ENCODE measurements at regions of chr14 and their contacts with region 1.

Region 1: DNA sequence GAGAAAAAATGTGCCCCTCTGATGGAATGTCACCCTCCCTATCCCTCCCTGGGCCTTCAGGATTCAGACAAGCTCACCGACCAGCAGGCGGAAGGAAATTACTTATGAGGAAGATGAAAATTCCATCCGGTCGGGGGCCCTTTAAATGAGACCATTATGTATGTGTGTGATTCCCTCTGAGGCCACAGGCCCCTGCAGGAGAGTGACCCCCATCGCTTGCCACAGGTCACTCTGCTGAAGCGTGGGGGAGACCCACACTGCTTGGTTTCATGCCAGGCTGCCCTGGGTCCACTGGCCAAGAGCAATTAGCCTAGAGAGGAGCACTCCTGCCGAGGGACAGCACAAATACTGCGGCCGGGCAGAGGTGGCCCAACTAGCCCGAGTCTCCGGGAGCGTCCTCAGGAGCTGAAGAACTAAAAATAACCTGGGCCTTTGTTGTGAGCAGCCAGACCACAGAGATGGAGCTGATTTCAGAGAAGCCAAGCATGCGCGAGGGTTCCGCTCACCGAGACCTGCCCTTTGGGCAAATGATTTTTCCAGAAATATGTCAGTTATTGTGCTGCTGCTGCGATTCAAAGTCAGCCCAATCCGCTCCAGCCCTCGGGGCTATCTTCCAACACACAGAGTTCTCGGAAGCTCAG is 276.4 kb downstream of the DPF3 start:
- DNase-seq: peak; percentile 40 to 42
- ATAC-seq: peak; percentile 61 to 70
- H3K4me3 ChIP-seq: peak overlapping the region in 3 of 4 donors; percentile 10 to 28 (median 16)
- H3K27ac ChIP-seq: peak overlapping the region; percentile 75 to 90 (median 85)
- H3K4me1 ChIP-seq: peaks cover 58% of the 10 kb centered on the region in 2 donors
- H3K27me3 ChIP-seq: no peaks in the 10 kb centered on the region
- CTCF ChIP-seq: no peak
- POLR2A ChIP-seq: no peak

Region 2: DNA sequence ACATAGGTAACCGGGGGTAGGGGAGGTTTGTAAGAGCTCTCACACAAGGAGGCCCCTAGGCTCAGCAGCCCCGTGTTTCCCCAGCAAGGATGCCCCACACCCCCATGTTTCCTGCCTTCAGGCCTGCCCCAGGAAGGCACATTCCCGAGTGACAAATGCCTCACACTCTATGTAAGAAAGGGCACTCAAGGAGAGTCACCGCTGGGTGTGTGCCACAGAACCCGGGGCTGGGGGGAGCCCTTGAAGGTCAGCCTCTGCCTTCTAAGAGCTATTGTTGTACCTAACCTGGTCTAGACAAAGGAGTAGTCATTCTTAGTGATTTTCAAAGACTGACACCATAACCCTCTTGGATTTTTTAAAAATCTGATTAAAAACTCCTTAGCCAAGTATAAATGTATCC is 57.2 kb before region 1 on chr14:
- in situ Hi-C with region 1: no loop called
- intact Hi-C with region 1: loop called (anchors 5 kb)
- DNase-seq: no peak
- ATAC-seq: no peak
- H3K4me3 ChIP-seq: no peak overlapping the region
- H3K27ac ChIP-seq: peak overlapping the region in 1 of 4 donors; percentile 10
- H3K4me1 ChIP-seq: peaks cover 32 to 45% of the 10 kb centered on the region in 2 donors
- H3K27me3 ChIP-seq: no peaks in the 10 kb centered on the region
- CTCF ChIP-seq: no peak
- POLR2A ChIP-seq: no peak

Region 3: DNA sequence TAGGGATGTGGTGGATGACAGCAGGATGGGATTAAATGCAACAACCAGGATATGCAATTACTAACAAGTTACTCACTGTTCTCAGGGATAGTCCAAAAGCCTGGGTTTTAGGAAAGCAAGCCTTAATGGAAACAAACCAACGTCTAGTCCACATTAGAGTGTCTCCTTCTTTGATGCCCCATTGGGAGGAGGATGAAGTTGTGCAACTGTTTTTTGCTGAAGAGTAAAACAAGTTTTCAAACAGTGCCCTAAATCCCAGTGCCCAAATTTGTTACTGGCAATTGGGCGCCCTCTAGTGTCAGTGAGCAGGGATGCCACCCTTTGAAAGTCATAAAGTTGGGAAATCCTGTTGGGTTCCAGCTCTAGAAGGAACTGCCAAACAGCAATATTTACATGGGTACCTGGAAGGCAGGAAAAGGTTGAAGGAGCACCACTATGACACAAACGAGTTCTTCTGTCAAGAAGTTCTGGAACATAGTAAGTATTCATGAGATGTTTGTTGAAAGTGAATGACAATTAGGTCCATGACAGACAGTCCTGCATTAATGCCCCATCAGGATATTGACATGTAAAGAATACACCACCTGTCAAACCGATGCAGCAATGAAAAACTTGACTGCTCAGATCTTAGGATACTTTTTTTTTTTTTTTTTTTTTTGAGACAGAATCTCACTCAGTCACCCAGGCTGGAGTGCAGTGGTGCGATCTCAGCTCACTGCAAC is 287.5 kb after region 1 on chr14:
- in situ Hi-C with region 1: no loop called
- intact Hi-C with region 1: loop called (anchors 5 kb)
- DNase-seq: peak; percentile 49 to 72
- ATAC-seq: peak; percentile 48 to 49
- H3K4me3 ChIP-seq: no peak overlapping the region
- H3K27ac ChIP-seq: peak overlapping the region; percentile 6 to 87 (median 31)
- H3K4me1 ChIP-seq: peaks cover 37 to 69% of the 10 kb centered on the region in 2 donors
- H3K27me3 ChIP-seq: no peaks in the 10 kb centered on the region
- CTCF ChIP-seq: peak; percentile 92 to 97 (median 95)
- POLR2A ChIP-seq: no peak

Measured in gastrocnemius medialis (tissue), 4 donors.